ENCODE measurements at regions of chr1 and their contacts with region 1.

Region 1: DNA sequence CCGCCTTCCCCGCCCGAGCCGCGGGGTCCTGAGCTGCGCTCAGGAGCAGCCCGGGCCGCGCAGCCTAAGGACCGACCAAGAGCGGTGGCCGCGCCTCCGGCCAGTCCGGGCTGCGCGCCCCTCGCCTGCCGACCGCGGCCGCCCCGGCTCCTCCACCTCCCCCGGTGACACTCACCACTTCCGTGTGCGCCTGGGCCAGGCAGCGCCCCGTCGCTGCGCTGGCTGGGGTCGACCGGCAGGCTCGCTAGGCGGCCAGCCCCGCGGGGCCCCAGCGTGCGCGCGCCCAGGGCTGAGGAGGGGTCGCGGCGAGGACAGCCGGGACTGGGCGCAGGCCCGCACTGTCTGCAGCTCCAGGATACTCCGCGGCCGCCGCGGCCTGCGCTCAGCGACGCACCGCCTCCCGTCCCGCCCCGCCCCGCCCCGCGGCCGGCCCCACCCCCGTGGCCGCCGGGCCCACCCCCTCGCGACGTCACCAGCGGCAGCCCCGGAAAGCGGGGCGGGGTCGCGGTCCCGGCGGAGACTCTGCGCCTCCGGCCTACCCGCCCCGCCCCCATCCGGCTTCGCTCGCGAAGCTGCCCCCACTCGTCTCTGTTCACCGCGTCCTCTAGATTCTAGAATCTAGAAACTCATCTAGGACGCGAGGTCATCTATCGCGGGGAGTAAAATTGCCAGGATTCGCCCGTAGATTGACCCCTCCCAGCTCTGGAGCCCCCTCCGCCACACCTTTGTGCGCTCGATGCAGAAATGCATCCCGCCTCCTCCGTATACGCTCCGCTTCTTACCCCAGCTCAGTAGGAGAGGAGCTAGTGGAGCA is at the start of gene JAK1:
- DNase-seq: peak; percentile 81
- H3K4me3 Mint-ChIP-seq: peak within 1 kb of the TSS; percentile 93
- H3K27ac Mint-ChIP-seq: peak within 1 kb of the TSS; percentile 88
- H3K4me1 Mint-ChIP-seq: peaks cover 55% of the 10 kb centered on the region
- H3K27me3 Mint-ChIP-seq: peaks cover 2% of the 10 kb centered on the region
- total RNA-seq, gene JAK1: 102 TPM in 2 replicates

Region 2: GRCh38 chr1:63593303-63593885 is 1373.0 kb before region 1 on chr1 and contains the start of gene PGM1:
- intact Hi-C with region 1: loop called (anchors 10 kb)
- DNase-seq: peak; percentile 68
- H3K4me3 Mint-ChIP-seq: peak within 1 kb of the TSS; percentile 95
- H3K27ac Mint-ChIP-seq: peak within 1 kb of the TSS; percentile 98
- H3K4me1 Mint-ChIP-seq: peaks cover 44% of the 10 kb centered on the region
- H3K27me3 Mint-ChIP-seq: no peaks in the 10 kb centered on the region
- total RNA-seq, gene PGM1: 38.9 and 39.8 TPM in 2 replicates

Region 3: GRCh38 chr1:64282354-64282753 is 684.0 kb before region 1 on chr1:
- intact Hi-C with region 1: no loop called
- DNase-seq: no peak
- H3K4me3 Mint-ChIP-seq: no peak overlapping the region
- H3K27ac Mint-ChIP-seq: no peak overlapping the region
- H3K4me1 Mint-ChIP-seq: no peaks in the 10 kb centered on the region
- H3K27me3 Mint-ChIP-seq: peaks cover 4% of the 10 kb centered on the region

Region 4: GRCh38 chr1:64569411-64569810 is 397.0 kb before region 1 on chr1:
- intact Hi-C with region 1: no loop called
- DNase-seq: no peak
- H3K4me3 Mint-ChIP-seq: no peak overlapping the region
- H3K27ac Mint-ChIP-seq: no peak overlapping the region
- H3K4me1 Mint-ChIP-seq: no peaks in the 10 kb centered on the region
- H3K27me3 Mint-ChIP-seq: peaks cover 14% of the 10 kb centered on the region

Region 5: GRCh38 chr1:64823691-64824476 is 142.5 kb before region 1 on chr1:
- intact Hi-C with region 1: loop called (anchors 5 kb)
- DNase-seq: peak; percentile 19
- H3K4me3 Mint-ChIP-seq: no peak overlapping the region
- H3K27ac Mint-ChIP-seq: no peak overlapping the region
- H3K4me1 Mint-ChIP-seq: peaks cover 36% of the 10 kb centered on the region
- H3K27me3 Mint-ChIP-seq: peaks cover 7% of the 10 kb centered on the region

Region 6: GRCh38 chr1:64877151-64877550 is 89.2 kb before region 1 on chr1:
- intact Hi-C with region 1: loop called (anchors 1 kb)
- DNase-seq: peak; percentile 38
- H3K4me3 Mint-ChIP-seq: peak overlapping the region; percentile 62
- H3K27ac Mint-ChIP-seq: peak overlapping the region; percentile 51
- H3K4me1 Mint-ChIP-seq: peaks cover 61% of the 10 kb centered on the region
- H3K27me3 Mint-ChIP-seq: no peaks in the 10 kb centered on the region

Region 7: GRCh38 chr1:64948905-64949833 is 17.2 kb before region 1 on chr1:
- intact Hi-C with region 1: loop called (anchors 2 kb)
- DNase-seq: no peak
- H3K4me3 Mint-ChIP-seq: peak overlapping the region; percentile 0
- H3K27ac Mint-ChIP-seq: peak overlapping the region; percentile 41
- H3K4me1 Mint-ChIP-seq: peaks cover 71% of the 10 kb centered on the region
- H3K27me3 Mint-ChIP-seq: no peaks in the 10 kb centered on the region

Region 8: DNA sequence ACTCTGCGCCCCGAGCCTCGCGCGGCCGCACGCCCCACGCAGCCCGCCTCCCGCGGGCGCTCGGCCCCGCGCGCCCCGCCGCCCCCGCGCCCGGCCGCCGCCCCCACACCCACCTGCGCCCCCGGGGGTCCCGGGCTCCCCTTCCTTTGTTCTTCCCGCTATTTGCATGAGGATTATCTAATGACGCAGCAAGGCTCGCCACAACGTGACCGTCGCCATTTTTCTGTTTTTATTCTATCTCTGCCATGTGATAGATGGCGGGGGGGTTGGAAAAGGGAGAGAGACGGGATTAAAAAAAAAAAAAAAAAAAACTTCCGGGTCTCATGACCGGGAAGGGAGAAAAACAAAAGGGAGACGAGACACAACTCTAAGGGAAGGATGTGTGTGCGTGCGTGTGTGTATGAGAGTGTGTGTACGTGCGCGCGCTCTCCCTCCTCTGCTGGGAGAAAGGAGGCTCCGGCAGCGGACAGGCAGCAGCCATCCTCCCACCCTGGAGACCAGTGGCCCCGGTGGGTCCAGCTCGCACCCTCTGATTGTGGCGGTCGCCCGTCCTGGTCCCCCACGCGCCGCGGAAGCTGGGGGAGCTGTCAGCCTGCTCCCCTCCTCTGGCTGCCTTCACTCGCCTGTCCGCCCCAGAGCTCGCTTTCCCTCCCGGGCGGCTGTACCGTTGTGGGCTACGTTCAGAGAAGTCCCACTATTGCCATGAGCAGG is 101.3 kb after region 1 on chr1:
- intact Hi-C with region 1: loop called (anchors 1 kb)
- DNase-seq: peak; percentile 25
- H3K4me3 Mint-ChIP-seq: peak overlapping the region; percentile 89
- H3K27ac Mint-ChIP-seq: peak overlapping the region; percentile 95
- H3K4me1 Mint-ChIP-seq: peaks cover 41% of the 10 kb centered on the region
- H3K27me3 Mint-ChIP-seq: no peaks in the 10 kb centered on the region

Region 9: GRCh38 chr1:65419681-65420589 is 453.6 kb after region 1 on chr1:
- intact Hi-C with region 1: loop called (anchors 1 kb)
- DNase-seq: peak; percentile 98
- H3K4me3 Mint-ChIP-seq: no peak overlapping the region
- H3K27ac Mint-ChIP-seq: peak overlapping the region; percentile 90
- H3K4me1 Mint-ChIP-seq: peaks cover 32% of the 10 kb centered on the region
- H3K27me3 Mint-ChIP-seq: peaks cover 5% of the 10 kb centered on the region

Measured in activated T-helper 1 cell treated with anti-CD3 and anti-CD28 coated beads, Interleukin-12 subunit alpha, Interleukin-12 subunit beta, Interleukin-2, Interleukin-4 antibody, amounts not matched to agents 30 ng/mL and 10 ng/mL and 1 ng/mL, durations not matched to agents 14 hours and 24 hours and 36 hours (primary cell).